GM10248 (cell line): ENCODE measurements at regions of chr1 and their contacts with region 1.

Region 1: GRCh38 chr1:6889875-6890480 is 104.7 kb downstream of the CAMTA1 start:
- DNase-seq: no peak
- CTCF ChIP-seq: peak; percentile 83

Region 2: DNA sequence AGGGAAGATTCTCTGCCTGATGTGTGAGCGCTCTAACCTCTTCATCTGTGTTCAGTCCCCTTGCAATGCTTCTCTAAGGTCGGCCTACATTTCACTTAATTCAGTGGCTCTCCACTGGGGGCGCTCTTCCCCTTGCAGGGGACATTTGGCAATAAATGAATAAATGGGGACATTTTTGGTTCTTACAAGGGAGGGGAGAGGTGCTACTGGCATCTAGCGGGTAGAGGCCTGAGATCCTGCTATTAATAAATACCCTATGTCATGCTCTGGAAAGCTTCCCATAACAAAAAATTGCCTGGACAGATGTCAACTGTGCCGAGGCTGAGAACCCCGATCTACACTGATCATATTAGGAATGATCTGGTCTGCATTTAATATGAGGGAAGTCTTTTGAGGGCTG is 162.4 kb before region 1 on chr1:
- CTCF ChIA-PET with region 1: interaction called, 23 read pairs
- POLR2A ChIA-PET with region 1: no interaction called
- DNase-seq: peak; percentile 73
- CTCF ChIP-seq: peak; percentile 84

Region 3: GRCh38 chr1:6795661-6796060 is 94.3 kb before region 1 on chr1:
- CTCF ChIA-PET with region 1: interaction called, 16 read pairs
- POLR2A ChIA-PET with region 1: no interaction called
- DNase-seq: no peak
- CTCF ChIP-seq: no peak

Region 4: GRCh38 chr1:6872573-6873261 is 17.3 kb before region 1 on chr1:
- CTCF ChIA-PET with region 1: interaction called, 13 read pairs
- POLR2A ChIA-PET with region 1: no interaction called
- DNase-seq: no peak
- CTCF ChIP-seq: no peak